ENCODE measurements at regions of chr5 and their contacts with region 1.

Region 1: DNA sequence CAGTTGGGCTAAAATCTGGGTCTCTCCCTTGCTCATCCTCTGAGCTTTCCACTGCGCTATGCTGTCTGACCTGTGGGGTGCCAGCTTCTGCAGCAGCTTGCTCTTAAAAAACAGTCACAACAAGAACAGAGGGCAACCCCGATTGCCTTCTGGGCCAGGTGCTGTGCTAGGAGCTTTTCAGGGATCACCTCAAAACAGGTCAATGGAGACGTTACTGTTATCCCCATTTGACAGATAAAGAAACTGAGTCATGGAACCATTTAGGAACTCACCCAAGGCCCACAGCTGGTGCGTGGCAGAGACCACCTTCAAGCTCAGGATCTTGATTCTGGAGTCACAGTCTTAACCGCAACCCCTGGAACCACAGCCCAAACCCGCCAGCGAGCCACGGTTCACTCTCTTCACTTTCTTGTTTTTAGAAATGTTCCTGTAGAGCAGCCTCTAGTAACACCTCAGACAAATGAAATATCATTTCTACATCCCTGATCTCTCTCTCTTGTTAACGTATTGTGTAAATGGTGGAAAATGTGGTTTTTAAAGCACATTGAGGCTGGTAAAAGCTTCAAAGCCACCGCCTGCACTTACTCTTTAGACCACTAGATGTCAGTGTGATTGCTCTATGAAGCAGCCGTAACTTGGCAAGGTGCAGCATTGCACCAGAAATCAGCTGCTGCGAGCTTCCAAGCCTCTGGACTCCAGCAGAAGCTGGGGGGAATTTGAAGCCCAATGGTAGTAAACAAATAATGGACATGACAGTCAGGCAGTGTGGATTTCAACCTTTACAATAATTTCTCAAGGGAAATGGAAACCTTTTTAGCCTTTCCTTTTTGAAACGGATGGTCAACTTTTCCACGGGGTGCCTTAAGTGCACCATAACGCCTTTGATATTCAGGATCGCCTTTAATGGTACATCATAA is 1.7 kb downstream of the FYB1 start:
- DNase-seq: peak; percentile 78
- H3K4me3 ChIP-seq: no peak overlapping the region
- H3K27ac ChIP-seq: no peak overlapping the region
- H3K4me1 ChIP-seq: peaks cover 17% of the 10 kb centered on the region
- H3K27me3 ChIP-seq: no peaks in the 10 kb centered on the region
- CTCF ChIP-seq: peak; percentile 97 to 99

Region 2: DNA sequence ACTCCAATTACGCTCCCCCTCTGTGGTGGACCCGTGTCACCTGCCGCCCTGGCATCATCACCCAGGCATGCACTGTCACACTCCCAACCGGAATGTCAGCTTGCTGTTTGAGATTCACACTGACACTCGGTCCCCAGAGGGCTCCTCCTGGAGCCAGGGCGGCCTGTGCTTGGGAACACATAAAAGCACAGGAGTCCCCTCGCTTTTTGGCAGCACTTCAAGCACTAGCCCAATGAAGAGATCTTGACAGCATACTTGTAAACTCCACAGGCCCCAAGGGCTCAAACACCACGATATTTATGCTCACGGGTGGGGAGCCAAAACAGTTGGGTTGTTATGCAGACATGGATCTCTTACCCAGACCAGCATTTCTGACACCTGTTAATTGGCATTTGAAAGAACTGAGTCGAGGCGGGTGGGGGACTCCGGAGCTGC is 1050.0 kb before region 1 on chr5:
- CTCF ChIA-PET with region 1: no interaction called
- dilution Hi-C with region 1: no loop called
- in situ Hi-C with region 1: no loop called
- intact Hi-C with region 1: no loop called
- DNase-seq: no peak
- H3K4me3 ChIP-seq: no peak overlapping the region
- H3K27ac ChIP-seq: no peak overlapping the region
- H3K4me1 ChIP-seq: no peaks in the 10 kb centered on the region
- H3K27me3 ChIP-seq: peaks cover 4% of the 10 kb centered on the region
- CTCF ChIP-seq: no peak

Region 3: DNA sequence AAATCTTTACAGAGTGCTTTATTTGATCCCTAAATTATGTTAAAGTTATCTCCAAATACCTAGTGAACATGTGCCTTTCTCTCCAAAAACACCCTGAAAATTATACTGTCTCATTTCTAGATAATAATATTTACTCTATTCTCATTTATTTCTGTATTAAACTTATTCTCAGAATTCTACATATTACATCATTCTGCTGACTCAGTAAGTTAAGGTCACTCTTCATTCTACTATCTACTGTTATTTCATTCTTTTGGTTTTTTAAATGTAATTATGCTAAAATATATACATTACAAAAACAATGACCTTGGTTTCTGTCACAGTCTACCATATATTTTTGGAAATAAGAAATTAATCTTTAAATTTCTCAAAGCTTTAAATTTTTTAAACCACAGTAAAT is 239.6 kb before region 1 on chr5:
- CTCF ChIA-PET with region 1: no interaction called
- dilution Hi-C with region 1: no loop called
- in situ Hi-C with region 1: no loop called
- intact Hi-C with region 1: no loop called
- DNase-seq: no peak
- H3K4me3 ChIP-seq: no peak overlapping the region
- H3K27ac ChIP-seq: no peak overlapping the region
- H3K4me1 ChIP-seq: peaks cover 6% of the 10 kb centered on the region
- H3K27me3 ChIP-seq: no peaks in the 10 kb centered on the region
- CTCF ChIP-seq: no peak

Region 4: DNA sequence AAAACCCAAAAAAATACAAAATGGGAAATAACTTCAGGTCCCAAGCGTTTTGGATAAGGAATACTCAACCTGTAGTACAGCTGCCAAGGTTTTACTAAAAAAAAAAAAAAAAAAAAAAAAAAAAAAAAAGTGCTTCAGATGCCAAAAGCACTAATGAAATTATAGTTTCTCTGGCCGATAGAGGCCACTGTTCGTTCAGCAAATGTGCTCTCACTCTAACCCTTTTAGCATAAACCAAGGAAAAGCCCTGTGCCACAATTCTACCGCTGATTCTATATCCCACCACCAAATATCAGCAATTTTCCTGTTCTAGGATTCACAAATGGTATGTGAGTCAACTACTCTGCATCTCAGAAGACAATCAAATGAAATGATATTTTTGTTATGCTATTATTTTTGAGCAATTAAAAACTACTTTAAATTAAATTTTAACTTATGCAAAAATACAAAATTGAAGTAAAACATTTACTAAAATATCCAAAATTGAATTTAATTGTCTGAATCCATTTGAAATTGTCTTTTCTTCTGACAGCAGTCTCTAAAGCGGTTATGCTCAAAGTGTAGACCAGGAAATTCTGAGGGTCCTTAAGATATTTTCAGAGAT is 223.2 kb before region 1 on chr5:
- CTCF ChIA-PET with region 1: no interaction called
- dilution Hi-C with region 1: no loop called
- in situ Hi-C with region 1: no loop called
- intact Hi-C with region 1: loop called (anchors 5 kb)
- DNase-seq: peak; percentile 61
- H3K4me3 ChIP-seq: no peak overlapping the region
- H3K27ac ChIP-seq: no peak overlapping the region
- H3K4me1 ChIP-seq: no peaks in the 10 kb centered on the region
- H3K27me3 ChIP-seq: no peaks in the 10 kb centered on the region
- CTCF ChIP-seq: peak; percentile 49 to 63

Region 5: DNA sequence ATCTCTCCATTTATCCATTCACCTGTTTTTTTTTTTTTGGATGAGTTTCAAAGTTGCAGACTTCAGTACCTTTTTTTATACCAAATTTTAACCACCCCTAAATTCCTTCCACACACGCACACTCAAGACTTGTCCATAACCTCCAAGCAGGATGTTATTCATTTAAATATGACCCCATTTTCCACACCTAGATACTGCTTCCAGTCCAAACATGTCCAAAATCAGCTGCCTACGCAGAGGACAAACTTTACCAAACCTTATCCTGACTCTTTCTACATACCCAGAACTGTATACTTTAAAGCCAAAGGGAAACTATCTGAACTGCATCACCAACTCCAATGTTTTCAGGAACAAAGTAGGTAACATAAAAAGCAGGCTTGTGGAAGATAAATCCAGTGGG is 37.8 kb after region 1 on chr5:
- CTCF ChIA-PET with region 1: no interaction called
- dilution Hi-C with region 1: no loop called
- in situ Hi-C with region 1: no loop called
- intact Hi-C with region 1: loop called (anchors 1 kb)
- DNase-seq: peak; percentile 95
- H3K4me3 ChIP-seq: peak overlapping the region; percentile 36 to 42 (median 39)
- H3K27ac ChIP-seq: peak overlapping the region; percentile 98
- H3K4me1 ChIP-seq: peaks cover 19% of the 10 kb centered on the region
- H3K27me3 ChIP-seq: no peaks in the 10 kb centered on the region
- CTCF ChIP-seq: no peak

Region 6: DNA sequence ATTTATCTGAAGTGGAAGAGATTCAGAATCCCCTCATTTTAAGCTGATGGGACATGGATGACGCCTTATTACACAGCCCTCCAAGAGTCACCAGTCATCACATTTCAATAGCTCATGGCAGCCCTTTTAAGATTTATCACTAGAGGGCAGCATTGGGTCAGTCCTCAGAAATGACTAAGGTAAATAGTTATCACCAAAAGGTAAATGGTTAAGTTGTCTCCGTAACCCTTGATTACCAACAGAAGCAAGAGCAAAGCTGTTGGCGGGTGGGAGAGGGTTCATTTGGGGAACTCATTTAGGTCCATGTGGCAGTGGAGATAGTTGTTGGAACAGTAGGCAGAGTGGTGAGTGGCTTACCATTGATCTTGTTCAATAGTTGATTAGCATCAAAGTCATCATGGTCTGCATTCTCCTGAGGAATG is 158.7 kb after region 1 on chr5:
- CTCF ChIA-PET with region 1: interaction called, 3 read pairs
- dilution Hi-C with region 1: no loop called
- in situ Hi-C with region 1: no loop called
- intact Hi-C with region 1: loop called (anchors 1 kb)
- DNase-seq: peak; percentile 52
- H3K4me3 ChIP-seq: no peak overlapping the region
- H3K27ac ChIP-seq: no peak overlapping the region
- H3K4me1 ChIP-seq: no peaks in the 10 kb centered on the region
- H3K27me3 ChIP-seq: no peaks in the 10 kb centered on the region
- CTCF ChIP-seq: peak; percentile 83 to 84

Region 7: GRCh38 chr5:39570403-39571027 is 352.9 kb after region 1 on chr5:
- CTCF ChIA-PET with region 1: no interaction called
- dilution Hi-C with region 1: no loop called
- in situ Hi-C with region 1: no loop called
- intact Hi-C with region 1: loop called (anchors 2 kb)
- DNase-seq: peak; percentile 28
- H3K4me3 ChIP-seq: no peak overlapping the region
- H3K27ac ChIP-seq: no peak overlapping the region
- H3K4me1 ChIP-seq: no peaks in the 10 kb centered on the region
- H3K27me3 ChIP-seq: no peaks in the 10 kb centered on the region
- CTCF ChIP-seq: peak; percentile 69 to 71